Activated CD4-positive, alpha-beta memory T cell treated with anti-CD3 and anti-CD28 coated beads, Interleukin-2, amount 10 ng/mL, durations not matched to agents 7 days and 5 days (primary cell): ENCODE measurements at regions of chr16 and their contacts with region 1.

Region 1: GRCh38 chr16:2155091-2156021 is at the start of gene TRAF7:
- DNase-seq: peak; percentile 99
- H3K4me3 Mint-ChIP-seq: peak within 1 kb of the TSS; percentile 95
- H3K27ac Mint-ChIP-seq: peak within 1 kb of the TSS; percentile 89
- H3K4me1 Mint-ChIP-seq: peaks cover 54% of the 10 kb centered on the region
- H3K27me3 Mint-ChIP-seq: no peaks in the 10 kb centered on the region
- total RNA-seq, gene TRAF7: 57.3 to 60.3 TPM

Region 2: DNA sequence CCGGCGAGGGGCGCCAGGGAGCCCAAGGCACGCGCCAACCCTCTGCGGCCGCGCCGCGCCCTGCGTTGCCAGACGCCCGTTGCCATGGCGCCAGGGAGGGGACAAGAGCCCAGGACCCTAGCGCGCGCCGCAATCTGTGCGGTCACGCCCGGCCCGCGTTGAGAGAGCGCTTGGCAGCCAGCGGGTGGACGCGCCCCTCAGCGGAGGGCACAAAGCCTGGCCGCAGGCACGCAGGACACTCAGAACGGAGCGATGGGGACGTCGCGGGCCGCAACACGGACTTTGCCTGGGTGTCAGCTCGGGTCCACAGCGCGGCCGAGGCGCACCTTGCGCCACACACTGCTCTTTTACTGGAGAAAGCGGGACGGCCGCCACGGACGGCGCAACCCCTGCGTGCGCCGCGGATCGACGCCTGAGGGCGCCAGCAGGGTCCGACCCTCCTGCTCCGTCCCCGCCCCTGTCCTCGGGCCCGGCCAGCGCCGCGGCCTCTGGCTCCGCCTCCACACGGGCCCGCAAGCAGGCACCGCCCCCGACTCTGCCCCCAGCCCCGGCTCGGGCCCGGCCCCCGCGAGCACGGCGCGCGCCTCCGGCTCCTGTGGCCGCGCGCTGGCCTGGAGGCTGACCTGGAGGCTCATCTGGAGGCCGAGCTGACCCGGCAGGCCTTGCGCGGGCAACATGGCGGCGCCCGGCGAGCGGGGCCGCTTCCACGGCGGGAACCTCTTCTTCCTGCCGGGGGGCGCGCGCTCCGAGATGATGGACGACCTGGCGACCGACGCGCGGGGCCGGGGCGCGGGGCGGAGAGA is 171.6 kb before region 1 on chr16 and contains the start of gene GFER:
- CTCF ChIA-PET with region 1: interaction called, 3 read pairs
- POLR2A ChIA-PET with region 1: interaction called, 12 read pairs
- DNase-seq: peak; percentile 83
- H3K4me3 Mint-ChIP-seq: peak within 1 kb of the TSS; percentile 80
- H3K27ac Mint-ChIP-seq: peak within 1 kb of the TSS; percentile 32
- H3K4me1 Mint-ChIP-seq: peaks cover 24% of the 10 kb centered on the region
- H3K27me3 Mint-ChIP-seq: peaks cover 32% of the 10 kb centered on the region
- total RNA-seq, gene GFER: 29.1 to 32.0 TPM

Region 3: GRCh38 chr16:2003827-2004641 is 151.3 kb before region 1 on chr16:
- CTCF ChIA-PET with region 1: interaction called, 18 read pairs
- POLR2A ChIA-PET with region 1: interaction called, 24 read pairs
- DNase-seq: peak; percentile 91
- H3K4me3 Mint-ChIP-seq: no peak overlapping the region
- H3K27ac Mint-ChIP-seq: no peak overlapping the region
- H3K4me1 Mint-ChIP-seq: peaks cover 45% of the 10 kb centered on the region
- H3K27me3 Mint-ChIP-seq: no peaks in the 10 kb centered on the region

Region 4: DNA sequence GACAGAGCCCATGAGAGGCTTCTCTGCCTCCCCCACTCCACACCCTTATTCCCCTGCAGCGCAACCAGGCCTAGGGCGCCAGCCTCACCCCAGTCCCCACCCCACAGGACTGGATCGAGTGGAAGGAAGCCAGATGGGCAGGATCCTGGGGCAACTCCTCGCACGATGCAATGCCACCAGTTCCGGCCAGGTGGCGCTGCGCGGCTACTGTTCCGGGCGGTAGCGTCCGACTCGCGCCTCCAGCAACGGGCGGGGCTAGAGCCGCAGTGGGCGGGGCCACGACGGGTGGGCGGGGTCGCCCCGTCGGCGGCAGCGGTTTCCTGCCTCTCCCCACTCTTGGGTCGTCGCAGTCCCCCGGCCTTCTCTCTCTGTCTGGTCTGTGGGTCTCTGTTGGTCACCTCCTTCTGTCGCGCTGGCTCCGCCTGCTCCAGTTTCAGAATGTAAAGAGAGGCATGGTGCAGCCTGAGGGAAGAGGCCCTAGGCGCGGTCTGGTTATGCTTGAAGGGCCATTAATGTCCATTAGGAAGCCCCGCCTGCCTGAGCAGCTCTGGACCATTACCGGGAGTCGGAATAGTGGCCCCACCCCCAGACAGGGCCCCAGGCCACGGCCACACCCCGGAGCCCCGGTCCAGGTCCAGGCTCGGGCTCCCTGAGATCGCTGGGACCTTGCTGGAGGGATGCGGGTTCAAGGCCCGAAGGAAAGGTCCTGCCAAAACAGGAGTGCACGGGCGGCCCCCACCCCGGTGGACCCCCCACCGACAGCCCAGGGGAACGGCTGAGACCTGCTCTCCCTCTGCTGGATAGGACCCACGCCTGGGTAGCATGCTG is 132.0 kb before region 1 on chr16:
- CTCF ChIA-PET with region 1: interaction called, 9 read pairs
- POLR2A ChIA-PET with region 1: interaction called, 10 read pairs
- DNase-seq: peak; percentile 97
- H3K4me3 Mint-ChIP-seq: peak overlapping the region; percentile 64
- H3K27ac Mint-ChIP-seq: peak overlapping the region; percentile 58
- H3K4me1 Mint-ChIP-seq: peaks cover 19% of the 10 kb centered on the region
- H3K27me3 Mint-ChIP-seq: peaks cover 46% of the 10 kb centered on the region

Region 5: DNA sequence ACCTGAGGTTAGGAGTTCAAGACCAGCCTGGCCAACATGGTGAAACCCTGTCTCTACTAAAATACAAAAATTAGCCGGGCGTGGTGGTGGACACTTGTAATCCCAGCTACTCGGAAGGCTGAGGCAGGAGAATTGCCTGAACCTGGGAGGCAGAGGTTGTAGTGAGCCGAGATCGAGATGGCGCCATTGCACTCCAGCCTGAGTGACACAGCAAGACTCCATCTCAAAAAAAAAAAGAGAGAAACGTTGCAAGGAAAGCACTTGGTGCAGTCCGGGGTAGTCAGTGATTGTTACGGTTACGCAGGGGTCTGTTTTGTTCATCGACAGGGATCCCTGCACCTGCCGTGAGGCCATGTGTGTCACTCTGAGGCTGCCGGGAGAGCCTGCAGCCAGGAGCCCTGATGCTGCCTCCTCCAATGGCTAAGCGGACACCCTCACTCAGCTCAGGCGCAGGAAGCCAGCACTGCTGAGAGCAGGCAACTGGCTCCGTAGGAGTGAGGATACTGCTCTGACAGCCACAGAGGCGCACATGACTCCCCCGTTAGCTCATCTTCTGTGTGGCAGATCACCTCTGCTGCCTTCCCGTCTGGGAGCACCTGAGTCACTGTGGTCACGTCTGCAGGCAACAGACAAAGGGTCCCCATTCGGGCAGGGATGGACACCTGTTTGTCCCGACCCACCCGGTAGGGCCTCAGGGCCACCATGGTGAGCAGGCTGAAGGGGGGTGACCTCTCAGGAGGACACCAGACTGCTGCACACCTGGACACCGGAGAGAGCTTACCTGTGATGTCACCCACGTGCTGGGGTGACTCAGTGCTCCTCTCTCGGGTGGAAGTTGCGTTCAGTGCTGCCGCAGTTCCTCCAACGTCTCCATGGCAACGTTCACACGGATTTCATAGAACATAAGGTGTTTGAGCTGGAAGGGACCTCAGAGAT is 12.1 kb before region 1 on chr16:
- CTCF ChIA-PET with region 1: interaction called, 56 read pairs
- POLR2A ChIA-PET with region 1: interaction called, 30 read pairs
- DNase-seq: no peak
- H3K4me3 Mint-ChIP-seq: no peak overlapping the region
- H3K27ac Mint-ChIP-seq: no peak overlapping the region
- H3K4me1 Mint-ChIP-seq: peaks cover 5% of the 10 kb centered on the region
- H3K27me3 Mint-ChIP-seq: no peaks in the 10 kb centered on the region

Region 6: GRCh38 chr16:2205104-2205966 is 50.0 kb after region 1 on chr16 and contains the start of gene MLST8:
- CTCF ChIA-PET with region 1: interaction called, 3 read pairs
- POLR2A ChIA-PET with region 1: interaction called, 38 read pairs
- DNase-seq: peak; percentile 91
- H3K4me3 Mint-ChIP-seq: peak within 1 kb of the TSS; percentile 73
- H3K27ac Mint-ChIP-seq: peak within 1 kb of the TSS; percentile 73
- H3K4me1 Mint-ChIP-seq: peaks cover 30% of the 10 kb centered on the region
- H3K27me3 Mint-ChIP-seq: peaks cover 9% of the 10 kb centered on the region
- total RNA-seq, gene MLST8: 32.6 to 33.7 TPM

Region 7: DNA sequence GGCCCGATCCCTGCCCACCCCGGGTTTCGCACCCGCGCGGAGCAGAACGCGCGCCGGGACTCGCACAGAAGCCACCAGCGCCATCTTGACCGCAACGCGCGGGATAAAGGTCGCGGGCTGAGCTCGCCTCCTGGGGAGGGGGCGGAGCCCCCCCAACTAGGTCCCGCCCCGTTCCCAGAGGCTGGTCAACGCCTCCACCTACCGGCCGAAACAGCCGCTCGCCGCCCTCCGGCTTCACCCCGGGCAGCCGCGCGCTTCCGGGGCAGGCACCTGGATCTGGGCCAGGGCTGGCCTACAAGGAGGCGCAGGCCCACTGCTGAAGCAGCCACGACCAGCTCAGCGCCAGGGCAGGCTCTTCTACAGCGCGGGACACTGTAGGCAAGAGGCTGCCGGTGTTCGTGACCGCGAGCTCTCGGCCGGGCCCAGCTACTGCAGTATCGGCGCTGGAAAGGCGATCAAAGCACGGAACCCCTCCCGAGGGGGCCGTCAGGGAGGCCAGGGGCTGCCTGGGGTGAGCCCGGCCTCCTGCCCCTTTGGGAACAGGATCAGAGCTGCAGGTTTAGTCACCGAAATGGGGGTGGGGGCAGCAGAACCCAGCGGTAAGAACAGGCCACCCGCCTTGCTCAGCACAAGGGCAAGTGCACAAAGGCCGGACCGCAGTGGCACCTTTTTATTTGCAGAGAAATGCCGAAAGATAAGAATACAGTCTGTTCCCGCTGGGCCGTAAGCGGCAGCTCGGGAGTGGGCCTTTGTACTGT is 96.3 kb after region 1 on chr16 and contains the start of gene ECI1:
- CTCF ChIA-PET with region 1: interaction called, 6 read pairs
- POLR2A ChIA-PET with region 1: interaction called, 18 read pairs
- DNase-seq: peak; percentile 88
- H3K4me3 Mint-ChIP-seq: peak within 1 kb of the TSS; percentile 90
- H3K27ac Mint-ChIP-seq: peak within 1 kb of the TSS; percentile 92
- H3K4me1 Mint-ChIP-seq: peaks cover 20% of the 10 kb centered on the region
- H3K27me3 Mint-ChIP-seq: no peaks in the 10 kb centered on the region
- total RNA-seq, gene ECI1: 43.0 to 44.8 TPM

Region 8: GRCh38 chr16:2329551-2329950 is 174.2 kb after region 1 on chr16:
- CTCF ChIA-PET with region 1: no interaction called
- POLR2A ChIA-PET with region 1: no interaction called
- DNase-seq: no peak
- H3K4me3 Mint-ChIP-seq: no peak overlapping the region
- H3K27ac Mint-ChIP-seq: no peak overlapping the region
- H3K4me1 Mint-ChIP-seq: no peaks in the 10 kb centered on the region
- H3K27me3 Mint-ChIP-seq: peaks cover 8% of the 10 kb centered on the region